ENCODE measurements at regions of chr7 and their contacts with region 1.

Region 1: DNA sequence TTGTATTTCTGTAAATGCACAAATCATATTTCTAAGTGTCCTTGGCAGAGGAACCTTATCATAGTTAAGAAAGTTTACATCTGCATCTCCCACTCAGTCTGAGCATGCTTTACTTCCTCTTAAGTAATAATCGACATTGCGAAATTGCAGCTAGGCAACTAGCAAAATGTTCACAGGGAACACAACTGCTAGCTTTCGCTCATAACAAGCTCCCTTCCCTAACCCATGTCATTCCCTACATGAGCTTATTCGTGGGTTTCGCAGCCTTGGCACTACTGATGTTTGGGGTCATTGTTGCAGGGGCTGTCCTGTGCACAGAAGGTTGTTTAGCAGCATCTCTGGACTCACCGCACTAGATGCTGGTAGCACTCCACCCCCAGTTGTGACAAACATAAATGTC is 71.6 kb downstream of the AHR start:
- DNase-seq: no peak
- H3K4me3 ChIP-seq: no peak overlapping the region
- H3K27ac ChIP-seq: no peak overlapping the region
- H3K4me1 ChIP-seq: peaks cover 23% of the 10 kb centered on the region
- H3K27me3 ChIP-seq: no peaks in the 10 kb centered on the region
- CTCF ChIP-seq: no peak
- POLR2A ChIP-seq: no peak

Region 2: DNA sequence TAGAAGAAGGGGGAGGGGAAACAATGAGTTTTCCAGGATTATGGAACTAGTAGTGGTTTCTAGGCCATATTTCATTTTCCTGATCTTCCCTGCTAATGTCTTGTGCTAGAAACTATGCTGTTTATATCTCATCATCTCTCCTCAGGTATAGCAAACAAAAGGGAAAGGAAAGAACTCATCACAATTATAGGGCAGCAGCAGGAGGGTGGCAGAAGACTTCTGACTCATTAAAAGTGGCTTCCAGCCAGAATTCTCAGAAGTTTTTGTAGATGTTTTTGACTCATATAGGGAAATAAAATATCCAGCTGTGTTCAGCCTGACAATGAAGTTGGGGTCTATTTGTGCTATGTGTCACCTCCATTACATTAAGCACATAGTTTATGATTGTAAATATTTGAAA is 65.2 kb before region 1 on chr7:
- CTCF ChIA-PET with region 1: interaction called, 20 read pairs
- POLR2A ChIA-PET with region 1: interaction called, 4 read pairs
- dilution Hi-C with region 1: no loop called
- intact Hi-C with region 1: loop called (anchors 1 kb)
- DNase-seq: peak; percentile 94
- H3K4me3 ChIP-seq: peak overlapping the region in 1 of 3 experiments; percentile 27
- H3K27ac ChIP-seq: peak overlapping the region; percentile 79
- H3K4me1 ChIP-seq: peaks cover 52% of the 10 kb centered on the region
- H3K27me3 ChIP-seq: no peaks in the 10 kb centered on the region
- CTCF ChIP-seq: no peak
- POLR2A ChIP-seq: no peak

Region 3: GRCh38 chr7:17311952-17312351 is 58.1 kb before region 1 on chr7:
- CTCF ChIA-PET with region 1: no interaction called
- POLR2A ChIA-PET with region 1: no interaction called
- dilution Hi-C with region 1: no loop called
- intact Hi-C with region 1: loop called (anchors 1 kb)
- DNase-seq: no peak
- H3K4me3 ChIP-seq: no peak overlapping the region
- H3K27ac ChIP-seq: no peak overlapping the region
- H3K4me1 ChIP-seq: peaks cover 33% of the 10 kb centered on the region
- H3K27me3 ChIP-seq: no peaks in the 10 kb centered on the region
- CTCF ChIP-seq: no peak
- POLR2A ChIP-seq: no peak

Region 4: DNA sequence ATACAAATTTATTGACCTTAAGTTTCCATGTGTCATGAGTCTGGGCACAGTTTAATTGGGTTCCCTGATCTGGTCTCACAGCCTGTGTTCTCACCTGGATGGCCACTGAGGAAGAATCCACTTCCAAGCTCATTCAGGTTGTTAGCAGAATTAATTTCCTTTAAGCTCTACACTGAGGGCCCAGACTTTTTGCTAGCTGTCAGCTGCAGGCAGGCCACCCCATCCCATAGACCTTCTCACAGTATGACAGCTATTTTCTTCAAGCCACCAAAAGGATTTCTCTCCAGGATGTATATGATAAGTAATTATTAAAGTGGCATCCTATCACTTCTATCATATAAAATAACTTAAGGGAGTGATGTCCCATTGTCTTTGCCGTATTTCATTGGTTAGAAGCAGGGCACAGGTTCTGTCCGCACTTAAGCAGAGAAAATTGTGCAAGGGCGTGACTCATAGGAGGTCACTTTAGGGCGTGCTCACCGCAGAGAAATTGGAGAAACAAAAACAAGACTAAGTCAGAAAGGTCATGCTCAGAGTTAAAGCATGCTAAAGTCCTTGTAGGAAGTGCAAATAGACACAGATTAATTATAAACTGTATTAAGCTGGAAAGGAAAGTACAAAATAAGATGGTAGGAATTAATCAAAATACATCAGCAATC is 38.3 kb after region 1 on chr7:
- CTCF ChIA-PET with region 1: interaction called, 3 read pairs
- POLR2A ChIA-PET with region 1: no interaction called
- dilution Hi-C with region 1: no loop called
- intact Hi-C with region 1: loop called (anchors 2 kb)
- DNase-seq: peak; percentile 80
- H3K4me3 ChIP-seq: no peak overlapping the region
- H3K27ac ChIP-seq: peak overlapping the region; percentile 26
- H3K4me1 ChIP-seq: peaks cover 33% of the 10 kb centered on the region
- H3K27me3 ChIP-seq: no peaks in the 10 kb centered on the region
- CTCF ChIP-seq: no peak
- POLR2A ChIP-seq: no peak

Region 5: DNA sequence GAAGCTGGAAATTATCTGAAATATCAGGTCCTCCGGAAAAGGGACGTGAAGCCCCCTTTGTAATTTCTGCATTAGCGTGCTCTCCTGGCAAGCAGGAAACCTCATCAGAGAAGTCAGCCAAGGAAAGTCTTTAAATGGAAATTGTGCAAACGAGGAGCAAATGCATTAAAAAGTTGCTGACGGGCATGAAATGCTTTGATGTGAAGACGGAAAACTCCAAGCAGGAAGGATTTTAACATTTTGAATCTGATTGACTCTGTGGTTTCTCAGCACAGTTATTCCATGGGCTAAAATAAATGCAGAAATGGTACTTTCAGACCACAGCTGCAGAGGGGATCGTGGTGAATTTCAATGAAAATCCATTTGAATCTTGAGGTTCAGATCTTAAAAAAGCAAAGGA is 96.1 kb after region 1 on chr7:
- CTCF ChIA-PET with region 1: no interaction called
- POLR2A ChIA-PET with region 1: no interaction called
- dilution Hi-C with region 1: no loop called
- intact Hi-C with region 1: no loop called
- DNase-seq: no peak
- H3K4me3 ChIP-seq: no peak overlapping the region
- H3K27ac ChIP-seq: no peak overlapping the region
- H3K4me1 ChIP-seq: peaks cover 7% of the 10 kb centered on the region
- H3K27me3 ChIP-seq: no peaks in the 10 kb centered on the region
- CTCF ChIP-seq: no peak
- POLR2A ChIP-seq: no peak

Region 6: DNA sequence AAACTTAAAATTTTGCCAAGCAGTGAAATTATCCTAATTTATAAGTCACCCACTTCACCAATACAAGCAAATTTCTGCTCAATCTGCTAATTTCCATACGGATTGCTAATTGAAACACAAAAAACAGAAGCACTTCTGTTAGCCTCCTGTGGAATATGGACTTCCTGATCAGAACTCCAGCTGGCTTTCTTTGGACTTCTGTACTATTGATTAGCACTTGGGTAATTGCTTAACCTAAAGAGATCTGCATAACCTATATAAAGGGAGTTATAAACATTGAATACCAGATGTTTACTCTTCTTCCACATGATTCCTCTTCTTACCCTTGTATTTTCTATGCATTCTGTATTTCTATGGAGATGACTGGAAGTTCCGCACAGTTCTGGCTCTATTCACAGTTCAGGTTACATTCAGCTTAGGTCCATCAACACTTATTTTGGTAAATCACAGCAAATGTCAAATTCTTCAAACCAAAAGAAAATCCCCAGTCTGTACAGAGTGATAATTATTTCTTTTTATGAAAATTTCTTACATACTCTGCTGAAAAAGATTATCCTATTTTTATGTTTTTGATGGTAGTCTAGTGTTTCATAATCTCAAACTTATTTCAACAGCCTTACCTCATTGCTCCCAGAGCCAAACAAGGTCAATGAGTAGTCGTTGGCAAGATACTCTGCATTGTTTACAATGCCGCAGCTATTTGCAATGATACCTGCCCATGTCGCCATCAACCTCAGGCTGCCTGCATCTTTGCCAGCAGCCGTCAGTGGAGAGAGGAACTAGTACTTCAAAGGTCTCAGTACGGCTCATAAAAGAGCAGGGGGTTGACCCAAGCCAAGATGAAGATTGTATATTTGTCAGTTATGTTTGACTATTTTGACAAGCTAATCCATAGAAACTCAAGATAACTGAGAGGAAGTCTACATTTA is 154.0 kb after region 1 on chr7:
- CTCF ChIA-PET with region 1: no interaction called
- POLR2A ChIA-PET with region 1: no interaction called
- dilution Hi-C with region 1: no loop called
- intact Hi-C with region 1: loop called (anchors 2 kb)
- DNase-seq: no peak
- H3K4me3 ChIP-seq: no peak overlapping the region
- H3K27ac ChIP-seq: no peak overlapping the region
- H3K4me1 ChIP-seq: peaks cover 22% of the 10 kb centered on the region
- H3K27me3 ChIP-seq: no peaks in the 10 kb centered on the region
- CTCF ChIP-seq: no peak
- POLR2A ChIP-seq: no peak

Region 7: GRCh38 chr7:17593819-17594419 is 223.8 kb after region 1 on chr7:
- CTCF ChIA-PET with region 1: no interaction called
- POLR2A ChIA-PET with region 1: no interaction called
- dilution Hi-C with region 1: no loop called
- intact Hi-C with region 1: no loop called
- DNase-seq: no peak
- H3K4me3 ChIP-seq: no peak overlapping the region
- H3K27ac ChIP-seq: no peak overlapping the region
- H3K4me1 ChIP-seq: no peaks in the 10 kb centered on the region
- H3K27me3 ChIP-seq: no peaks in the 10 kb centered on the region
- CTCF ChIP-seq: no peak
- POLR2A ChIP-seq: no peak

Region 8: DNA sequence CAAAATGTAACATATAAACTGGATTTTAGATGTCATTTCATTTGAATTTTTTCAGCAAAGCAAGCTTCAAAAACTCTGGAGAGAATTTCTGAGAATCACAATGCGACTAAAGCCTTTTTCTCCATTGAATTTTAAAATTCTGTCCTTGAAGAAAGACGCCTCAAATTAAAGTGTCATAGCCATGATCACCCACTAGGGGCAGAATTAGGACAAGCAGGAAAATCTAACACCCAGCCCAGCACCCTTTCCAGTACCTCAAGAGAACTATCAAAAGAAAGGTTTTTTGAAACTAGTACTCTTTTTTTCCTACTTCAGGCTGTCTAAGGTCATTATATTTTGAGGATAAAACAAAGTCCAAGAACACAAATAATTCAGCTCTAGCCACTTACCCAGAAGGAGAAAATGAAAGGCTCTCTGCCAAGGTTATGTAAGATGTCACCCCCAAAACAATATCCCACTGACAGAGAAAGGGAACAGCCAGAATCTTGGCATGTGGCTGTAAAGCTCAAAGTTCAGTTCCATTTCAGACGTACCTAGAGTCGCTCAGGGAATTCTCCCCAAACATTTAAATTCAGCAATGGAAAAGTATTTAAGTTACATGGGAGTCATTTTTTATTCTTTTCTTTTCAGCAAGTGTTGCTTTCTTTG is 270.8 kb after region 1 on chr7:
- CTCF ChIA-PET with region 1: no interaction called
- POLR2A ChIA-PET with region 1: no interaction called
- dilution Hi-C with region 1: no loop called
- intact Hi-C with region 1: loop called (anchors 5 kb)
- DNase-seq: peak; percentile 33
- H3K4me3 ChIP-seq: no peak overlapping the region
- H3K27ac ChIP-seq: no peak overlapping the region
- H3K4me1 ChIP-seq: no peaks in the 10 kb centered on the region
- H3K27me3 ChIP-seq: no peaks in the 10 kb centered on the region
- CTCF ChIP-seq: peak; percentile 45 to 56
- POLR2A ChIP-seq: no peak

Measured in endothelial cell of umbilical vein (primary cell).